ENCODE measurements at regions of chr5 and their contacts with region 1.

Region 1: DNA sequence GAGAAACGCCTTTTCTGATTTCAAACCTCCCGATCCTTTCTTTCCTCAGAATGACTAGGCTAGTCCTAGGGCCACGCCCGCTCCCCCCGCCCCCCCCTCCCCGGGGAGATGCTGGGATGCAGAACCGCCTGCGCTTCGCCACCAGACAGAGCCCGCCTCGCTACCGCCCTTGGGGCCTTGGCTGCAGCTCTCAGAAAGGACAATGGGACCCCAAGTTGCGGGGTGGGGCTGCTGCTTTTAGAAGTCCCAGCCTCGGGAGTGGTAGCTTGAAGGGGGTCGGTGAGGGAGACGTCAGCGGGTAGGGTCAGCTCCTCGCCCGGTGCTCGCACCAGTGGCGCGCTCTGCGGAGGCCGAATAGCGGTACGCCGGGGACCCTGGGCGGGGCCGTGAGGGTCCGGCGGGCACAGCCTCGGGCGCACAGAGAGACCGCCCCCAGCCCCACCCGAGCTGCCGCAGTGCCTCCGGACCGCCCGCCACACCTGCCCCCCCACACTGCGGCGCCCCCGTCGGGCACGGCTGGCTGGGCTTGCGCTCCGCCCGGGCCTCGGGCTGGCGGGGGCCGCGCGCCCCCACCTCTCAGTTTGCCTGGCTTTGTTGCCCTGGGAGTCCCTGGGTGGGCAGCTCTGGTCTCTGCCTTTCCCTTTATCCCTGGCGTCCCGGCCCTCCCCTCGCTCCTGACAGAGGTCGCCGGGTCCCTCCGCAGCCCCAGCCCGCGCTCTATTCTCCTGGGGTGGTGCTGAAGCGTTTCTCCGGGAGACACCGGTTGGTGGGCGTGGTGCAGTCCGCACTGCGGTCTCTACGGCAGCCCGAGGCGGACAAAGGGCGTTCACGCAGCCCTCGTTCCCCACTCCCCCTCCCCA is 1.2 kb downstream of the MAP1B start:
- DNase-seq: peak; percentile 55
- ATAC-seq: peak; percentile 77
- H3K4me3 ChIP-seq: peak overlapping the region; percentile 90
- H3K27ac ChIP-seq: no peak overlapping the region
- H3K4me1 ChIP-seq: peaks cover 5% of the 10 kb centered on the region; the same call in 1 of the 2 replicates
- H3K27me3 ChIP-seq: no peaks in the 10 kb centered on the region
- CTCF ChIP-seq: no peak

Region 2: GRCh38 chr5:71932655-71933338 is 175.6 kb before region 1 on chr5:
- CTCF ChIA-PET with region 1: no interaction called
- POLR2A ChIA-PET with region 1: no interaction called
- intact Hi-C with region 1: loop called (anchors 10 kb)
- DNase-seq: peak; percentile 80
- ATAC-seq: peak; percentile 88
- H3K4me3 ChIP-seq: no peak overlapping the region
- H3K27ac ChIP-seq: peak overlapping the region; percentile 93
- H3K4me1 ChIP-seq: peaks cover 25% of the 10 kb centered on the region
- H3K27me3 ChIP-seq: no peaks in the 10 kb centered on the region
- CTCF ChIP-seq: no peak

Region 3: DNA sequence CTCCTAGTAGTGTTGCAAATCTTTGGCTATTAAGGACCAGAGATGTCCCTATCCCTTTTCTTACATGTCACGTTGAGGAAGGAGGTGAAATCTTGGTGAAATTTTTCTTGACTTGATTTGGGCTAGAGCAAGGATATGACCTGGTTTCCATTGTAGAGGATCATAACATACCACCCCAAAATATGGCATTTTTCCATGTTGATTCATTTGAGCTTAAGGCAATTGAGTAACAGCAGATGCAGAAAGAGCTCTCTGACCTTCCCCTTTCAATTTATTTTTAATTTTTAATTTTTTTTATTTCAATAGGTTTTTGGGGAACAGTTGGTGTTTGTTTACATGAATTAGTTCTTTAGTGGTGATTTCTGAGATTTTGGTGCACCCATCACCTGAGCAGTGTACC is 62.3 kb before region 1 on chr5:
- CTCF ChIA-PET with region 1: no interaction called
- POLR2A ChIA-PET with region 1: no interaction called
- intact Hi-C with region 1: no loop called
- DNase-seq: no peak
- ATAC-seq: no peak
- H3K4me3 ChIP-seq: no peak overlapping the region
- H3K27ac ChIP-seq: no peak overlapping the region
- H3K4me1 ChIP-seq: no peaks in the 10 kb centered on the region
- H3K27me3 ChIP-seq: no peaks in the 10 kb centered on the region
- CTCF ChIP-seq: no peak